Right cardiac atrium (tissue), 5 donors: ENCODE measurements at regions of chr7 and their contacts with region 1.

Region 1: DNA sequence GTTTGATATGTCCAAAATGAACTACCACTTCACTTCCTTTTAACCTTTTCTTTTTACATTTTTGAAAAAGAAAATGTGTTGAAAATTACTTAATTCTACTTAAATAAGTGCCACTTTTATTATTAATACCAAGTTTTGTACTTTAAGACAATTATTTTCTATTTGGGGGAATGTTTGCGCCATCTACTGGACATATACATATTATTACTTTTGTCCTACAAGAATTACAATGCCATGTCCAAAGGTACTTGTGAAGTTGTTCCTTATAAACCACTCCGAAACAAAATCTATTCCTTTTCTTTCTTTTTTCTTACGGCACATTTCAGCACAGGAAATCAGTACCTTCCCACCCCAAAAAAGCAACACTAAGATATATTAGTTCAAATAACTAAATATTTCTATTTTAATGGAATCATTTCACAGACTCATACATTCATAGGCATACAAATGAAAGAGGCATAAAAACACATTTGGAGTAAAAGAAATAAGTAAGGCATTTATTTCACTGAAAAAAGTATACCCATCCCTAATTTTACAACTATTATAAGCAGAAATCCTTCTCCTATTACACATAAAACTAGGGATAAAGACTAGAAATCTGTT is 169.9 kb downstream of the RNF133 start:
- DNase-seq: no peak
- ATAC-seq: no peak
- H3K4me3 ChIP-seq: no peak overlapping the region
- H3K27ac ChIP-seq: no peak overlapping the region
- H3K4me1 ChIP-seq: no peaks in the 10 kb centered on the region
- H3K27me3 ChIP-seq: no peaks in the 10 kb centered on the region

Region 2: GRCh38 chr7:121832347-121832746 is 696.6 kb before region 1 on chr7:
- intact Hi-C with region 1: no loop called
- DNase-seq: peak in 1 of 3 donors; percentile 45
- ATAC-seq: no peak
- H3K4me3 ChIP-seq: no peak overlapping the region
- H3K27ac ChIP-seq: no peak overlapping the region
- H3K4me1 ChIP-seq: no peaks in the 10 kb centered on the region
- H3K27me3 ChIP-seq: no peaks in the 10 kb centered on the region

Region 3: DNA sequence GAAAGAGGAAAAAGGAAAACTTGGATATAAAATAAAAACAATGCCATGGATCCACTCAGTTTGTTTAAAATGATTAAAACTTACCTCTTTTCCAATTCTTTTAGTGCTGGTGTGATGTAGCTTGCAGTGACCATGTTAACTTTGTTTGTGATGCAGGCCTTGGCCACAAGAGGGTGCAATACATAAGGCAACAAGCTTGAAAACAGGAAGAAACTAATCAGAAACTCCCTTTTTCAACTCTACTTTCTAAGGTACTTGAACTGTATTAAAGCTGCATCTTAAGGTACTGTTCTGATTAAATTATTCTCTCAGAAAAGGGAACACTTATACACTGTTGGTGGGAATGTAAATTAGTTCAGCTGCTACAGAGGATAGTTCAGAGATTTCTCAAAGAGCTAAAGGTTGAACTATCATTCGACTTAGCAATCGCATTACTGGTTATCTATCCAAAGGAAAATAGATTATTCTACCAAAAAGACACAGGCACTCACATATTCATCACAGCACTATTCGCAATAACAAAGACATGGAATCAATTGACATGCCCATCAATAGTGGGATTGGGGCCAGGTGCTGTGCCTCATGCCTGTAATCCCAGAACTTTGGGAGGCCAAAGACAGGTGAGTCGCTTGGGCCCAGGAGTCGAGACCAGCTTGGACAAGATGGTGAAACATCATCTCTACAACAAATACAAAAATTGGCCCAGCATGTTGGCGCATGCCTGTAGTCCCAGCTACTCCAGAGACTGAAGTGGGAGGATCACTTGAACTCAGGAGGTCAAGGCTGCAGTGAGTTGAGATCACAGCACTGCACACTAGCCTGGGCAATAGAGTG is 435.8 kb before region 1 on chr7:
- intact Hi-C with region 1: loop called in 3 of 4 experiments (anchors 10 kb)
- DNase-seq: peak; percentile 44 to 76 (median 45)
- ATAC-seq: no peak
- H3K4me3 ChIP-seq: no peak overlapping the region
- H3K27ac ChIP-seq: no peak overlapping the region
- H3K4me1 ChIP-seq: no peaks in the 10 kb centered on the region
- H3K27me3 ChIP-seq: no peaks in the 10 kb centered on the region

Region 4: GRCh38 chr7:122219253-122219865 is 309.6 kb before region 1 on chr7:
- intact Hi-C with region 1: loop called in 3 of 4 experiments (anchors 5 to 10 kb)
- DNase-seq: no peak
- ATAC-seq: no peak
- H3K4me3 ChIP-seq: no peak overlapping the region
- H3K27ac ChIP-seq: no peak overlapping the region
- H3K4me1 ChIP-seq: no peaks in the 10 kb centered on the region
- H3K27me3 ChIP-seq: no peaks in the 10 kb centered on the region

Region 5: GRCh38 chr7:122225874-122226273 is 303.1 kb before region 1 on chr7:
- intact Hi-C with region 1: loop called in 2 of 4 experiments (anchors 5 to 10 kb)
- DNase-seq: no peak
- ATAC-seq: no peak
- H3K4me3 ChIP-seq: no peak overlapping the region
- H3K27ac ChIP-seq: no peak overlapping the region
- H3K4me1 ChIP-seq: no peaks in the 10 kb centered on the region
- H3K27me3 ChIP-seq: no peaks in the 10 kb centered on the region

Region 6: DNA sequence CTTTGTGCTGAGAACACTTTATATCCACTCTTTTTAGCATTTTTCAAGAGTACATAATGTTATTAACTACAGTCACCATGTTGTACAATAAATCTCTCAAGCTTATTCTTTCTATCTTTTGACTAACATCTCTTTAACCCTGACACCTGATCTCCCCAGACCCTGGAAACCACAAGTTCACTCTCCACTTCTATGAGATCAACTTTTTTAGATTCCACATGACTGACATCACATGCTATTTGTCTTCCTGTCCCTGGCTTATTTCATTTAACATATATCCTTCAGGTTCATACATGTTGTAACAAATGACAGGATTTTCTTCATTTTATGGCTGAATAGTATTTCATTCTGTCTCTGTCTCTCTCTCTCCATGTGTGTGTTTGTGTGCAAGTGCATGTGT is 655.3 kb after region 1 on chr7:
- intact Hi-C with region 1: no loop called
- DNase-seq: no peak
- ATAC-seq: no peak
- H3K4me3 ChIP-seq: no peak overlapping the region
- H3K27ac ChIP-seq: no peak overlapping the region
- H3K4me1 ChIP-seq: no peaks in the 10 kb centered on the region
- H3K27me3 ChIP-seq: no peaks in the 10 kb centered on the region